ENCODE measurements at regions of chr18 and their contacts with region 1.

Region 1: GRCh38 chr18:23703057-23703986 is 14.1 kb downstream of the LAMA3 start:
- DNase-seq: peak; percentile 15
- ATAC-seq: peak; percentile 68
- H3K4me3 Mint-ChIP-seq: no peak overlapping the region
- H3K27ac Mint-ChIP-seq: no peak overlapping the region
- H3K4me1 Mint-ChIP-seq: no peaks in the 10 kb centered on the region
- H3K27me3 Mint-ChIP-seq: peaks cover 15% of the 10 kb centered on the region
- CTCF ChIP-seq: peak; percentile 52

Region 2: GRCh38 chr18:23629444-23629946 is 73.8 kb before region 1 on chr18:
- CTCF ChIA-PET with region 1: interaction called, 57 read pairs
- POLR2A ChIA-PET with region 1: no interaction called
- intact Hi-C with region 1: loop called (anchors 5 kb)
- DNase-seq: no peak
- ATAC-seq: peak; percentile 34
- H3K4me3 Mint-ChIP-seq: no peak overlapping the region
- H3K27ac Mint-ChIP-seq: no peak overlapping the region
- H3K4me1 Mint-ChIP-seq: peaks cover 12% of the 10 kb centered on the region
- H3K27me3 Mint-ChIP-seq: no peaks in the 10 kb centered on the region
- CTCF ChIP-seq: no peak